Activated CD4-positive, alpha-beta T cell treated with anti-CD3 and anti-CD28 coated beads for 36 hours (primary cell): ENCODE measurements at regions of chr2 and their contacts with region 1.

Region 1: DNA sequence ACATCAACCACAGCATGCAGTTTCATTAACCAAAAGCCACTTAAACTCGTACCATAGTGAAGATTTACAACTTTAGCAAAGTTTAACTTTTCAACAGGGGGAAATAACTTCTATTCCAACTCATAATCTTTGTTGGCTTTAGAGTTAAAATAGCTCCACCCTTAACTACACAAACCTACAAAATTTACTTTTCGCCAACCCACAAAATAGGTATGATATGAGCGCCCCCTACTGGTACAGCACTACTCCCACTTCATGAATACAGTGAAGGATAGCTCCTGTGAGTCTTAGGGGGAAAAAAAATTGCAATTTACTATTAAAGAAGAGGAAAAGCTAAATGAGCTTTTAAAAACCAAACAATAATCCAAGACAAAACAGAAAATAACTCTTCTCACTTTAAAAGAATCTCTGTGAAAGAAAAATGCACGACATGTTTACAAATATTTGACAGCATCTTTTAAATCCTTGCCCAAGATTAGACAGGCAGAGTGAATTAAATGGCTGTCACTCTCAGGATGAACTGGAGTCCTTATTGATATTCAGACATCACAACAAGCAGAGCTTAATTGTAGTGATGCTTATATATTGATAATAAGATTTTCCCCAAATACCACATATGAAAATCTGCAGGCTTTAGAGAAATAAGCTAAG is 32.2 kb downstream of the TMEFF2 start:
- DNase-seq: peak; percentile 80
- ATAC-seq: peak; percentile 74
- H3K4me3 Mint-ChIP-seq: no peak overlapping the region
- H3K27ac Mint-ChIP-seq: no peak overlapping the region
- H3K4me1 Mint-ChIP-seq: peaks cover 8% of the 10 kb centered on the region
- H3K27me3 Mint-ChIP-seq: peaks cover 9% of the 10 kb centered on the region

Region 2: DNA sequence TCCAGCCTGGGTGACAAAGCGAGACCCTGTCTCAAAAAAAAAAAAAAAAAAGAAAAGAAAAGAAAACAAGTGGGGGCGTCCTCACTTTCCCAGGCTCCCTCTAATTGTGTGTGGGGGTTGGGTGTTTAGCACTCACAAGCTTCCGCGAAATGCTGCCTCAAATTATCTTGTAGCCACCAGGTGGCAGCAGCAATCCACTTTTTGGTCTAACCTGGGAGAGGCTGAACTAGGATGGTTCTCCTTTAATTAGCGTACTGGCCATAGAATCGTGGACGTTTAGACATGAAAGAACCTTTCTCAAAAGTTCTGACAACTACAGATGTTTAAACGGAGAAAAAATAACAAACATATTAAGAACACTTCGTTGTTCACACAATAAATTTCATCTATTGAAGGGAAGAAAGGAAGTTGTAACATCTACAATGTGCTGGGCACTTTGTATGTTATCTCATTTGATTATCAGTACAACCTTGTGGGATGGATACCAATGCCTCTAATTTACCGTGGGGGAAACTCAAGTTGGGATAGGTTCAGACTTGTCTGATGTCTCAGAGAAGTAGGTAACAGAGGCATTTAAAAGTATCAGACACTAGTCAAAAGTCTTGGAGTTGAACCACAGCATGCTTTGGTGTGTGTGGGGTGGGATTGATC is 607.3 kb before region 1 on chr2:
- CTCF ChIA-PET with region 1: interaction called, 90 read pairs
- POLR2A ChIA-PET with region 1: no interaction called
- intact Hi-C with region 1: loop called (anchors 1 kb)
- DNase-seq: peak; percentile 90
- ATAC-seq: peak; percentile 93
- H3K4me3 Mint-ChIP-seq: no peak overlapping the region
- H3K27ac Mint-ChIP-seq: no peak overlapping the region
- H3K4me1 Mint-ChIP-seq: peaks cover 2% of the 10 kb centered on the region
- H3K27me3 Mint-ChIP-seq: peaks cover 14% of the 10 kb centered on the region

Region 3: DNA sequence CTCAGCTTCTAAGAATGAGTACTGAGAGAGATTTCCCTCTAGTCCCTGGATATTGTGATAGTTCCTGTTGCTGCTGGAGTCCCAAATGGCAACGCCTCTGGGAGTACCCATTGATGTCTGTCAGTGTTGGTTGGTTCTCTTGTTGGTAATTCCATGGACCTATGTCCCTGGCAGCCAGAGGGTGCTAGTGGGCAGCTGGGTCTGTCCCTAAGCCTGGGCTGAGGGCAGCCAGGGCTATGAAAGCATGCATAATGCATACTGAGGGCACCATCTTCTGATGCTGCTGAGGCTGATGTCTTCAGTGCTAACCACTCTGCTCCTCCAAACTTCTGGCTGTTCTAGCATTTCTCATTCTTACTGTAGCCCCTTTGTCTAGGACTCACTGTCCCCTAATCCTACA is 448.7 kb before region 1 on chr2:
- CTCF ChIA-PET with region 1: interaction called, 3 read pairs
- POLR2A ChIA-PET with region 1: no interaction called
- intact Hi-C with region 1: loop called (anchors 5 to 10 kb)
- DNase-seq: peak; percentile 52
- ATAC-seq: peak; percentile 68
- H3K4me3 Mint-ChIP-seq: no peak overlapping the region
- H3K27ac Mint-ChIP-seq: no peak overlapping the region
- H3K4me1 Mint-ChIP-seq: no peaks in the 10 kb centered on the region
- H3K27me3 Mint-ChIP-seq: no peaks in the 10 kb centered on the region

Region 4: DNA sequence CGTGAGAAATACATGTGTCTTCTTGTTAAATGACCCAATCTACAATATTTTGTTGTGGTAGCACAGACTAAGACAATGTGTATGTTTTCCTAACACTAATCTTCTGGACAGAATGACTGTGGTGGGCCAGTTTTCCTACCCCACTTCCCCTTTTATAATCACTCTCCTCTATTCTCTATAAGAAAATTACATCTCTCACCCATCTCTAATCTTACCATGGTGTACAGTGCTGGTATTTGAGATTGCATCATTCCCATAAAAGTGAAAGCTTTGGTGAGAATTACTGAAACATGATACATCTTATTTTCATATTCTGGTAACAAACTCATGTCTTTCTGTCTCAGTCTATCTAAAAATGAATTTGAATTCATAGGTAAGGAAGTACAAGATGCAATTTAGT is 356.1 kb before region 1 on chr2:
- CTCF ChIA-PET with region 1: interaction called, 78 read pairs
- POLR2A ChIA-PET with region 1: no interaction called
- intact Hi-C with region 1: no loop called
- DNase-seq: no peak
- ATAC-seq: peak; percentile 36
- H3K4me3 Mint-ChIP-seq: no peak overlapping the region
- H3K27ac Mint-ChIP-seq: no peak overlapping the region
- H3K4me1 Mint-ChIP-seq: no peaks in the 10 kb centered on the region
- H3K27me3 Mint-ChIP-seq: peaks cover 9% of the 10 kb centered on the region

Region 5: DNA sequence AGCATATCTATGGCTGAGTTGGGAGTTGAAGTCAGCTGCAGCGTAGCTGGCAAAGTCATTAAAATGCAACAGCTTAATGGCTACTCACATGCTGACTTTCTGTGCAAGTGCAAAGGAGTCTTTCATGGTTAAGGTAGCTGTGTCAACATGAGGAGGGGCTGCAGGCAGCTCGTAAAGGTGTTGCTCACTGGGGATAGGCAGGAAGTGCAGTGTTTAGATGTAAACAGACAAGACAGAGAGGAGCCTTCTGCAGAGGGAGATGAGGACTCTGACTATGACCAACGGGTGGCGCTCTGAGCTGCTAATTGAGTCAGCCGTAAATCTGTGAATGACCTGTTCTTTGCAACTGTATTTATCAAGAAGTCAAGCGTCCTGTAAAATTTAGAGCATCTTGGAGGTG is 293.3 kb before region 1 on chr2:
- CTCF ChIA-PET with region 1: interaction called, 11 read pairs
- POLR2A ChIA-PET with region 1: no interaction called
- intact Hi-C with region 1: loop called in 1 of 2 experiments (anchors 2 kb)
- DNase-seq: peak; percentile 31
- ATAC-seq: no peak
- H3K4me3 Mint-ChIP-seq: no peak overlapping the region
- H3K27ac Mint-ChIP-seq: no peak overlapping the region
- H3K4me1 Mint-ChIP-seq: no peaks in the 10 kb centered on the region
- H3K27me3 Mint-ChIP-seq: peaks cover 2% of the 10 kb centered on the region

Region 6: DNA sequence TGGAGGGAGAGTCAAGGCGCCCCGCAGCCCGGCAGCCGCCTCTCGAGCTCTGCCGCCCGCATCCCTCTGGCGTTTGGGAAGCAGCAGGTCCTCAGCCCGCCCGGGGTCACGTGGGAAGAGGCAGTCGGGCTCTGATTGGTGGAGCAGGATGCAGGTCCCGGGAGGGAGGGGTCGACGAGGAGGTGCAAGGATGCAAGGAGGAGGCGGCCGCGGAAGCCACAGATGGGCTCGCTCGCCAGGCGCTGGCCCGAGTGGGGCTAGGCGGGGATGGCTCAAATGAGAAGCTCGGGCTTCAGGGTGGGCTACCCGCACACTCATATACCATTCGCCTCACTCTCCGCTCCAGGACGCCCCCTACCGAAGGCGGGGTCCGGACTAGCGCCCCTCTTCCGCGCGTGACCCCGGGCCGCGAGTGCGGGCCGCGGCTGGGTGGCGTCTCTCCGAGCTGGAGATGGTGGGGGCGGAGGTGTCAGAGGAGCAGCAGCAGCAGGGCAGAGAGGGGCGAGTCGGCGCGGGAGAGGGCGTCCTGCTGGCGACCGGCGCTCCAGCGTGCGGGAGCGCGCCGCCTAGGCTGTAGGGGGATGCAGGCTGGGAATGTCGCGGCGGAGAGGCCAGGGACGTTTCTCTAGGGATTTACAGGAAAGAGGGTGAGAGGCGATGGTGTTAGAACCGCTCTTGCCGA is 32.5 kb after region 1 on chr2 and contains the start of gene TMEFF2:
- CTCF ChIA-PET with region 1: interaction called, 19 read pairs
- POLR2A ChIA-PET with region 1: no interaction called
- intact Hi-C with region 1: no loop called
- DNase-seq: peak; percentile 82
- ATAC-seq: peak; percentile 87
- H3K4me3 Mint-ChIP-seq: peak within 1 kb of the TSS; percentile 68
- H3K27ac Mint-ChIP-seq: no peak within 1 kb of the TSS
- H3K4me1 Mint-ChIP-seq: peaks cover 25% of the 10 kb centered on the region
- H3K27me3 Mint-ChIP-seq: peaks cover 52% of the 10 kb centered on the region
- total RNA-seq, gene TMEFF2: not detected

Region 7: GRCh38 chr2:192459422-192459821 is 296.9 kb after region 1 on chr2:
- CTCF ChIA-PET with region 1: no interaction called
- POLR2A ChIA-PET with region 1: no interaction called
- intact Hi-C with region 1: no loop called
- DNase-seq: no peak
- ATAC-seq: no peak
- H3K4me3 Mint-ChIP-seq: no peak overlapping the region
- H3K27ac Mint-ChIP-seq: no peak overlapping the region
- H3K4me1 Mint-ChIP-seq: no peaks in the 10 kb centered on the region
- H3K27me3 Mint-ChIP-seq: no peaks in the 10 kb centered on the region

Region 8: GRCh38 chr2:192513575-192513974 is 351.1 kb after region 1 on chr2:
- CTCF ChIA-PET with region 1: no interaction called
- POLR2A ChIA-PET with region 1: no interaction called
- intact Hi-C with region 1: no loop called
- DNase-seq: no peak
- ATAC-seq: no peak
- H3K4me3 Mint-ChIP-seq: no peak overlapping the region
- H3K27ac Mint-ChIP-seq: no peak overlapping the region
- H3K4me1 Mint-ChIP-seq: no peaks in the 10 kb centered on the region
- H3K27me3 Mint-ChIP-seq: no peaks in the 10 kb centered on the region